ENCODE measurements at regions of chr11 and their contacts with region 1.

Region 1: DNA sequence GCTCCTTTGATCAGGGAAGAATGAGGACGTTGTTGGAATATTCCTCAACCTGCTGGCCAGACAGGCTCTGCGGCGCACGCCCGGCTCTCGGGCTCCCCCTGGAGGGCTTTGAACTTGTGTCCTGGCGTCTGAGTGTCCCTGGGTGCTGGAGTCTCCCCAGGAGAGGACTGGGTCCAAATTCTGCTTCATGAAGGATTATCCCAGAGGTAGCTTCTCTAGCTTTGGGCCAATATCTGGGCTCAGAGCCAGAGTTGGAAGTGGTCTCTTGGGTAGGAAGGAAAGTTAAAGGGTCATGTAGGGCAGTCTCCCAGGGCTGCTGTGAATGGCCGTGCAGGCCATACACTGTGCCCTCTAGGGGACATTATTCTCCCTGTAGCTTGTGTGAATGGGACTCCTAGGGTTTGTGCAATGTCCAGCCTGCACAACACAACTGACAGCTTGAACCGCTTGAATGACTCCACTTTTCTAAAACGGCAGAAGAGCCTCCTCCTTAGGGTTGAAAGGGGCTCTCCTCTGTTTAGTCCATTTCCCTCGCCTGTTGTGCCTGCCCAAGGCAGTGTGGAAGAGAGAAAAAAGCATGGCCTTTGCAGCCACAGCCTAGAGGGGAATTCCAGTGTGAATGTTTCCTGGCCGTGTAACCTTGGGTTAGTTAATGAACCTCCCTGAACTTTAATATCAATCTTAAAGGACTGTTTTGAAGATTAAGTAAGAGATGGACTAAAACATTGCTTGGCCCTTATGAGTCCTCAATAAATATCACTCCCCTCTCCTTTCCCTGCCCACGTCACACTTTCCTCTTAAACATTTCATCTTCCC is 111.2 kb upstream of the THY1 start:
- DNase-seq: peak; percentile 78
- CTCF ChIP-seq: peak; percentile 78

Region 2: GRCh38 chr11:119168471-119169281 is 365.5 kb before region 1 on chr11 and contains the start of gene NLRX1:
- CTCF ChIA-PET with region 1: no interaction called
- POLR2A ChIA-PET with region 1: no interaction called
- DNase-seq: peak; percentile 96
- CTCF ChIP-seq: peak; percentile 98

Region 3: DNA sequence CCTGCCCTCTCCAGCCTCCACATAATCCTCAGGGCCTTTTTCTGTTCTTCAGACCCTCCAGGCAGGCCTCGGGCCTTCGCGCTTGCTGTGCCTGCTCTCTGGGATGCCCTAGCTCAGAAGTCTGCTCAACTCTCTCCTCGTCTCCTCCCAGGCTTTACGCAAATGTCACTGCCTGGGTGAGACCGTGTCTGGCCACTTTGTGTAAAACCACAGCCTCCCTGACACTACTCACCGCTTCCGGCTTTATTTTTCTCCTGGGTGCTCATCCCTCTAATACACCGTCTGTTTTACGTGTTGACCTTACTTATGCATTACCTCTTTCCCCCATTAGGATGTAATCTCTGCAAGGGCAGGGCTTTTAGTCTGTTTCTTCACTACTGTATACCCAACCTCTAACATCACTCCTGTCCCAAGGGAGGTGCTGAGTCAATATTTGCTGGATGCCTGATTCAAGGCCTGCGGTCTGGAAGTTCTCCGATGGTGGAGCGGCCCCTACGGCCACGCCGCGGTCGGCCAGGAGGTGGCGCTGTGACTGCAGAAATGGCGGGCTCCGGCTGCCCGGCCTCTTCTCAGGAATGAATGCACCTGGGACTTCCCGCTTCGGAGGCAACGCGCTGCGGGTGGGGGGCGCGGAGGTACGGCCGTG is 53.0 kb before region 1 on chr11:
- CTCF ChIA-PET with region 1: interaction called, 12 read pairs
- POLR2A ChIA-PET with region 1: no interaction called
- DNase-seq: peak; percentile 88
- CTCF ChIP-seq: peak; percentile 94

Region 4: DNA sequence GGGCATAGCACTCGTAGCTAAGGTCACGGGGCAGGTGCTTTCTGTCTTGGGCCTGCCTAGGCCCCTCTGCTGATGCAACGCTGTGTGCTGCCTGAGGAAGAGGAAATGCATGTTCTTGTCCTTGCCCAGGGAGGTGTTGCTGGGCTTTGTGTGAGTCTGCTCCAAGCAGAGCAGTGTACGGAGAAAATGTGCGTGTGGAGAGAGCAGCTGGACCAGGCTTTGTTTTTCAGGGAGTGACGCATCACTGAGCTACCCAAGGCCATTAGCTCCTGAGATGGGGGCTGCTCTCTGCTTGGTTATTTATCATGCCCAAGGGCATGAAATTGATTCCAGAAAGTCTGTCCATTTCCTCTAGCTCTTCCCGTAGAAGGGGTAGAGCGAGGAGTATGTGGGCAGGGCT is 28.3 kb before region 1 on chr11:
- CTCF ChIA-PET with region 1: interaction called, 14 read pairs
- POLR2A ChIA-PET with region 1: interaction called, 4 read pairs
- DNase-seq: no peak
- CTCF ChIP-seq: no peak

Region 5: GRCh38 chr11:119515771-119516400 is 18.2 kb before region 1 on chr11:
- CTCF ChIA-PET with region 1: interaction called, 10 read pairs
- POLR2A ChIA-PET with region 1: no interaction called
- DNase-seq: no peak
- CTCF ChIP-seq: no peak